ENCODE measurements at regions of chrX and their contacts with region 1.

Region 1: GRCh38 chrX:155056877-155057792 is 13.8 kb downstream of the CMC4 start:
- DNase-seq: peak; percentile 24
- ATAC-seq: peak; percentile 95
- H3K4me3 ChIP-seq: peak overlapping the region; percentile 24; the same call in 1 of the 2 replicates
- H3K27ac ChIP-seq: no peak overlapping the region; the same call in 1 of the 2 replicates
- H3K4me1 ChIP-seq: no peaks in the 10 kb centered on the region; the same call in 1 of the 2 replicates
- H3K27me3 ChIP-seq: no peaks in the 10 kb centered on the region
- CTCF ChIP-seq: peak; percentile 69 to 77 (median 73)
- EP300 ChIP-seq: no peak
- POLR2A ChIP-seq: no peak
- RAD21 ChIP-seq: peak; percentile 63

Region 2: DNA sequence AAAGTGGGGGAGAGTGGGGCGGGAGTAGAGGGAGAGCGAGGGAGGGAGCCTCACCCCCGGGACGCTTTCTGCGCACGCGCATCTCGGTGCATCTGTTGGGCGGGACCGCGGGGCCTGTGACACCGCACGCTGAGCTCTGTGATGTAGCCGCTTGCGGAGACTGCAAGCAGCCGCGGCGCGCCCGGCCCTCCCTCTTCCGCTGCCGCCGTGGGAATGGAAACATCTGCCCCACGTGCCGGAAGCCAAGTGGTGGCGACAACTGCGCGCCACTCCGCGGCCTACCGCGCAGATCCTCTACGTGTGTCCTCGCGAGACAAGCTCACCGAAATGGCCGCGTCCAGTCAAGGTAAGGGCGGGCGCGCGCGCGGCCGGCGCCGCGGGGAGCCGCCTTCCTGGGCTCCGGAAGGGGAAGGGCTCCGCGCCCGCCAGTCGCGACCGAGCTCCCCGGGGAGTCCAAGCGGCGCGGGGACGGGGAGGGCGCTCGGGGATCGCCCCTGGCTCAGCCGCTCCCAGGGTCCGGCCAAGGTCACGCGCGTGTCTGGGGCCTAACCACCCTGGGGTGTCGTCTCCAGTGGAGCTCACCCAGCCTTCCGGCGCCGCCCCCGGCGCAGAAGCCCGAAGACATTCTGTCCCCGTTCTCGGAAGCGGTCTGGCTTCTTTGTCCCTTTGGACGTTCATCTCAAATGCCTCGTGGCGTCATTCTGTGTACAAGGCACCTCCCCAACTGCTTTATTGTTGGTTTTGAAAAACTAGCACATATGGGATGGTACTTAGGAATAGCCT is 30.2 kb before region 1 on chrX and contains the start of gene FUNDC2:
- CTCF ChIA-PET with region 1: interaction called, 4 read pairs
- POLR2A ChIA-PET with region 1: no interaction called
- RAD21 ChIA-PET with region 1: interaction called, 3 read pairs
- SMC1A ChIA-PET with region 1: interaction called, 4 read pairs
- in situ Hi-C with region 1: no loop called
- intact Hi-C with region 1: loop called (anchors 2 kb)
- DNase-seq: peak; percentile 80
- ATAC-seq: peak; percentile 87
- H3K4me3 ChIP-seq: peak within 1 kb of the TSS; percentile 70
- H3K27ac ChIP-seq: peak within 1 kb of the TSS; percentile 94
- H3K4me1 ChIP-seq: no peaks in the 10 kb centered on the region
- H3K27me3 ChIP-seq: no peaks in the 10 kb centered on the region
- CTCF ChIP-seq: no peak
- EP300 ChIP-seq: no peak
- POLR2A ChIP-seq: peak; percentile 88
- RAD21 ChIP-seq: no peak
- polyA plus RNA-seq, gene FUNDC2: 232 to 285 TPM

Region 3: DNA sequence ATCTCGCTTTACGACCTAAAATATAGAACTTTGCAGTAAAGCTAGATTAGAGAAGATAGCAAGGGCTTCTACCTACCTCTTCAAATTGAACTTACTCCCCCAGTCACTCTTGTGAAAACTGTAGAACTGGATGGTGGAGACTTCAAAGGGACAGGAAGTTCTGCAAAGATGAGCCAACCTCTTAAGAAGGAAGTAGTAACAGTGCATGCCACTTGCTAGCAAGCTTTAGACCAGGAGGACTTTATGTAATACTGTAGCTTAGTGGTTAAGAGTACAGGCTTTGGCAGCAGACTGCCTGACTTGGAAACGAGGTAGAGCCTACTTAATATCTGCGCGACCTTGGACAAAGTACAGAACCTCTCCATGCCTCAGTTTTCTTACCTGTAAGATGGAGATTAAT is 131.7 kb after region 1 on chrX:
- CTCF ChIA-PET with region 1: no interaction called
- POLR2A ChIA-PET with region 1: no interaction called
- RAD21 ChIA-PET with region 1: no interaction called
- SMC1A ChIA-PET with region 1: no interaction called
- in situ Hi-C with region 1: no loop called
- intact Hi-C with region 1: no loop called
- DNase-seq: no peak
- ATAC-seq: no peak
- H3K4me3 ChIP-seq: no peak overlapping the region
- H3K27ac ChIP-seq: no peak overlapping the region
- H3K4me1 ChIP-seq: no peaks in the 10 kb centered on the region
- H3K27me3 ChIP-seq: no peaks in the 10 kb centered on the region
- CTCF ChIP-seq: no peak
- EP300 ChIP-seq: no peak
- POLR2A ChIP-seq: no peak
- RAD21 ChIP-seq: no peak

Measured in GM12878 (cell line).